PC-3 (cell line): ENCODE measurements at regions of chr7 and their contacts with region 1.

Region 1: DNA sequence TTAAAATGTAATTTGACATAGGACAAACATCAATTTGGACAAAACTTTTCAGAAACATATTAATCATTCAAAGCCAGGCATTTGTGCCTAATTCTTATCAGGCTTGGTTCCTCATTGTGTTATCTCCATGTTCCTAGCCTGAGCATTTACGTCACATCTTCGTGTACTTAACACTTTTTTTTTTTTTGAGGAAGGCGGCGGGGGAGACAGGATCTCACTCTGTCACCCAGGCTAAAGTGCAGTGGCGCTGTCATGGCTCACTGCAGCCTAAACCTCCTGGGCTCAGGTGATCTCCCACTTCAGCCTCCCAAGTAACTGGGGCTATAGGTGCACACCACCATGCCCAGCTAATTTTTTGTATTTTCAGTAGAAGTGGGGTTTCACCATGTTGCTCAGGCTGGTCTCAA is 19.8 kb downstream of the HNRNPA2B1 start:
- DNase-seq: no peak
- ATAC-seq: no peak
- H3K4me3 ChIP-seq: no peak overlapping the region
- H3K27ac ChIP-seq: no peak overlapping the region
- H3K4me1 ChIP-seq: no peaks in the 10 kb centered on the region
- H3K27me3 ChIP-seq: no peaks in the 10 kb centered on the region
- CTCF ChIP-seq: no peak

Region 2: DNA sequence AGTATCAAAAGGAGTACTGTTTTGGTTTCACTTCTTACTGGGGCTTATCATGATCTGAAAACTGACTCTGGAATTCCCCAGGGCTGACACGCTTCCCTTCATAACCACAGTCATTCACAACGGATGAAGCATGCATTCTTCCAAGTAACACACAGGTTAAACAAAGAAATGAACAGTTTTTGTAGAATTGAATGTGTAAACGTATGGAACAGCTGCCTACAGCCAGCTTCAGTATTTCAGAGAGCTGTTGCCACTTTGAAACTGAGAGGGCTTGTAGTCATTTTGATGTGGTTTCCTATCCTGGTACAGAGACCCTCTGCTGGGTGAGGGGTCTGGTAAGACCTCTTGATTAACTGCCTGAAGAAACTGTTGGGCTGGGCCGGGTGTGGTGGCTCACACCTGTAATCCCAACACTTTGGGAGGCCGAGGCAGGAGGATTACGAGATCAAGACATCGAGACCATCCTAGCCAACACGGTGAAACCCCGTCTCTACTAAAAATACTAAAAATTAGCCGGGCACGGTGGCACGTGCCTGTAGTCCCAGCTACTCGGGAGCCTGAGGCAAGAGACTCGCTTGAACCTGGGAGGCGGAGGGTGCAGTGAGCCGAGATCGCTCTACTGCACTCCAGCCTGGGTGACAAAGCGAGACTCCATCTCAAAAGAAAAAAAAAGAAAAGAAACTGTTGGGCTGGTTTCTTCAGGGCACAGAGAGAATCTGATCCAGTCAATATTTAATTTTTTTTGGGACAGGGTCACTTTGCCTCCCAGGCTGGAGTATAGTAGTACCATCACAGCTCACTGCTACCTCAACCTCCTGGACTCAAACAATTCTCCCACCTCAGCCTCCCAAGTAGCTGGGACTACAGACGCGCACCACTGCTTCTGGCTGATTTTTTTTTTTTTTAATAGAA is 24.1 kb before region 1 on chr7:
- CTCF ChIA-PET with region 1: interaction called, 4 read pairs
- POLR2A ChIA-PET with region 1: interaction called, 3 read pairs
- intact Hi-C with region 1: loop called (anchors 2 kb)
- DNase-seq: peak; percentile 93
- ATAC-seq: peak; percentile 48
- H3K4me3 ChIP-seq: peak overlapping the region; percentile 62; the same call in 1 of the 2 replicates
- H3K27ac ChIP-seq: peak overlapping the region; percentile 96
- H3K4me1 ChIP-seq: peaks cover 74% of the 10 kb centered on the region
- H3K27me3 ChIP-seq: no peaks in the 10 kb centered on the region
- CTCF ChIP-seq: no peak